Right lobe of liver (tissue), 6 donors: ENCODE measurements at regions of chr12 and their contacts with region 1.

Region 1: GRCh38 chr12:4037747-4038312 is 164.6 kb upstream of the PARP11 start:
- DNase-seq: peak in 1 of 3 donors; percentile 51
- ATAC-seq: peak; percentile 66 to 75 (median 74)
- H3K4me3 ChIP-seq: no peak overlapping the region
- H3K27ac ChIP-seq: no peak overlapping the region
- H3K4me1 ChIP-seq: no peaks in the 10 kb centered on the region
- H3K27me3 ChIP-seq: no peaks in the 10 kb centered on the region
- CTCF ChIP-seq: peak; percentile 68 to 88 (median 83)
- POLR2A ChIP-seq: no peak

Region 2: GRCh38 chr12:3882896-3883564 is 154.8 kb before region 1 on chr12:
- intact Hi-C with region 1: loop called in 1 of 2 experiments (anchors 5 kb)
- DNase-seq: no peak
- ATAC-seq: peak; percentile 51 to 81 (median 72)
- H3K4me3 ChIP-seq: no peak overlapping the region
- H3K27ac ChIP-seq: no peak overlapping the region
- H3K4me1 ChIP-seq: no peaks in the 10 kb centered on the region
- H3K27me3 ChIP-seq: no peaks in the 10 kb centered on the region
- CTCF ChIP-seq: peak; percentile 20 to 50 (median 38)
- POLR2A ChIP-seq: no peak